A673 (cell line): ENCODE measurements at regions of chr10 and their contacts with region 1.

Region 1: GRCh38 chr10:48431871-48432270 is 125.4 kb downstream of the MAPK8 start:
- DNase-seq: no peak
- H3K4me3 ChIP-seq: no peak overlapping the region
- H3K27ac ChIP-seq: no peak overlapping the region
- H3K4me1 ChIP-seq: no peaks in the 10 kb centered on the region
- H3K27me3 ChIP-seq: no peaks in the 10 kb centered on the region
- CTCF ChIP-seq: no peak

Region 2: DNA sequence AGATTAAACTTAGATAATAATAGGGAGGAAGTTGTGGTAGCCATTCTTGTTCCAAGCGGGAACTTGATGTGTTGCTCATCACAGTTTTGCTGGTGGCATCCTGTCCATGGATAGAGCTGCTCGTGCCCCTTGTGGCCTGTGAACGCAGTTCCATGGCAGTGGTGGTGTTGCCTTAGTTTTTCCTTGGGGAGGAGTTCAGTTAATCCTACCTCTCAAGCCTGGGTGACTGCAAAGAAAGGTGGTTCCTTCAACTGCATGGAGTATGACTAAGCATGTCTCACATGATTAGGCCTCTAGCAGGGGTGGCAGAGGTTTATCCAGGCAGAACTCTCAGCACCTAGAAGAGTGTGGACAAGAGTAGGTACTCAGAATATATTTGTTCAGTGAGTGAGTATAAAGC is 25.7 kb before region 1 on chr10:
- CTCF ChIA-PET with region 1: no interaction called
- POLR2A ChIA-PET with region 1: no interaction called
- intact Hi-C with region 1: loop called (anchors 2 kb)
- DNase-seq: peak; percentile 9
- H3K4me3 ChIP-seq: no peak overlapping the region
- H3K27ac ChIP-seq: no peak overlapping the region
- H3K4me1 ChIP-seq: peaks cover 33% of the 10 kb centered on the region
- H3K27me3 ChIP-seq: no peaks in the 10 kb centered on the region
- CTCF ChIP-seq: no peak

Region 3: GRCh38 chr10:48589266-48589665 is 157.4 kb after region 1 on chr10:
- CTCF ChIA-PET with region 1: no interaction called
- POLR2A ChIA-PET with region 1: no interaction called
- intact Hi-C with region 1: no loop called
- DNase-seq: no peak
- H3K4me3 ChIP-seq: no peak overlapping the region
- H3K27ac ChIP-seq: no peak overlapping the region
- H3K4me1 ChIP-seq: no peaks in the 10 kb centered on the region
- H3K27me3 ChIP-seq: peaks cover 11% of the 10 kb centered on the region
- CTCF ChIP-seq: no peak